Ascending aorta (tissue), 2 donors: ENCODE measurements at regions of chr12 and their contacts with region 1.

Region 1: DNA sequence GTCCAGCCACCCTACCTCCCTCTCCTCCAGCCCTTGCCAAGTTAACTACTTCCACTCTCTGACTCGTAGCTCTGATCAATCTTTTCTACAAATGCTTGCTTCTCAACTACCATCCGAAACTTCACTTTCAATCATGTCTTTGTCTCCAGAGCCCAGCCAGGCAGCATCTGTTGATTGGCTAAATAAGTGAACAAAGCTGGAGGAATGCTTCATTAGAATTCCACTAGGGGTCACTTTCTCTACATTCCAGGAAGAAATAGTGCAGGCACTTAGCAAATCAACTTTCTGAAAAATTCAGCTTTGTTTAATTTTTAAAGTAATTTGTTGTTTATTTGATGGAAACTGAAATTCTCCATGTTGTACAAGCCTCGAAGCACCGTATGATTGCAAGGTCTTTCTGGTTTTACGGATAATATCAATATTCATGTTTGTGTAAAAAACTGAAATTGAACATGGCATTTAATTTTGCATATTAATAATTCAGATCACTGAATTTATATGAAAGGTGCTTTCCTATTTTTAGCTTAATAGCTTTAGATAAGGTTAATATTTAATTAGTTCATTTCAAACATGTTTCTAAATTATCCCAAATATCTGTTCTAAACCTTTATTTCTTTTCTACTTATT is 32.4 kb upstream of the HELB start:
- DNase-seq: no peak
- H3K4me3 ChIP-seq: no peak overlapping the region
- H3K27ac ChIP-seq: no peak overlapping the region
- H3K4me1 ChIP-seq: no peaks in the 10 kb centered on the region
- H3K27me3 ChIP-seq: no peaks in the 10 kb centered on the region
- CTCF ChIP-seq: peak in 2 of 3 experiments; percentile 38 to 70

Region 2: GRCh38 chr12:66693901-66694675 is 424.2 kb after region 1 on chr12:
- intact Hi-C with region 1: loop called (anchors 5 kb)
- DNase-seq: no peak
- H3K4me3 ChIP-seq: no peak overlapping the region
- H3K27ac ChIP-seq: no peak overlapping the region
- H3K4me1 ChIP-seq: no peaks in the 10 kb centered on the region
- H3K27me3 ChIP-seq: no peaks in the 10 kb centered on the region
- CTCF ChIP-seq: peak; percentile 22 to 58 (median 24)